ENCODE measurements at regions of chr2 and their contacts with region 1.

Region 1: DNA sequence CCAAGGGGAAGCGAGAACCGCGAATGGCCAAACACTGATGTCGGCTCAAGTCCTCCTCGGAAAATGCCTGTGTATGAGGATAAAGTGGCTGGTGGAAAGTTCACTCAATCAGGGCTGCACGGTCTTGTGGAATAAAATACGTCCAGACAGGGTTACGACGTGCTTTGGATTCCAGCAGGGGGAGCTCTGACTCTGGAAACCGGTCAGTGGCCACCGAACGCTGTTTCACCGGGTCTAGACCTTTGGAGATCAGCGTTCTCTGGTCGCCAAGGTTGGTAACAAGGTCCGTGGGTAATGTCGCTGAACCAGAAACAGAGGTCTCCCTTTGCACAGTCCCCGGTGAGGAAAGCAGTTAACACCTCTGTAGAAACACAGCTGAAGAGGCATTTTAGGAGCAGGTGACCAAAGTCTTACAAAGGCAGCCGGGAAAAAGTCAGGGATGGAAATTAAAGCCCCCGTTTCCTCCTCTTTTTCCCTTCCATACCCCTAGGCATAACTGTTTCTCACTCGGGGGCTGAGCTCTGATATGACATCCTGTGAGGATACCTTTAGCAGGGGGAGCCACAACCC is 47.8 kb downstream of the CDCA7 start:
- H3K4me3 ChIP-seq: peak overlapping the region; percentile 31
- H3K27ac ChIP-seq: no peak overlapping the region; the same call in 1 of the 2 replicates
- H3K4me1 ChIP-seq: no peaks in the 10 kb centered on the region
- CTCF ChIP-seq: peak; percentile 94

Region 2: DNA sequence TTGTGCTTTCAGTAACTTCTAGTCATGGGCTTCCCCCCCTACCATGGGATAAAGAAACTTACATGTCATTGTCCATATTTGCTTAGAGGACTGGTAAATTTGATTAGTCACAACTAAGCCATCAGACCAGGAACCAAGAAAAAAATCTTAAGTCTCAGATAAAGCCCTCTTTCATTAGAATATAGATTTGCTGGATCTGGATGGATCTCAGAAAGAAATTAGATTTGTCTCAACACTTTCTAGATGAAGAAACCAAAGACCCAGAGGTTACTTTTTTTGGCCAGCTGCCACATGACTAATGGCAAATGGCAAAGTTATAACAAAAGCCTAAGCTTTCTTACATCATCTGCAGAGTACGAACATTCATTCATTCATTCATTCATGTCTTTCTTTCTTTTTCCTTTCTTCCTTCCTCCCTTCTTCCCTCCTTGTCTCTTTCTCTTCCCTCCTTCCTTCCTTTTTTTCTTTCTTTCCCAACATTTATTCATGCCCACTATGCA is 12.4 kb after region 1 on chr2:
- CTCF ChIA-PET with region 1: interaction called, 35 read pairs
- POLR2A ChIA-PET with region 1: no interaction called
- H3K4me3 ChIP-seq: no peak overlapping the region
- H3K27ac ChIP-seq: no peak overlapping the region
- H3K4me1 ChIP-seq: peaks cover 6% of the 10 kb centered on the region; the same call in 1 of the 2 replicates
- CTCF ChIP-seq: no peak

Region 3: GRCh38 chr2:173448938-173449471 is 46.5 kb after region 1 on chr2:
- CTCF ChIA-PET with region 1: interaction called, 59 read pairs
- POLR2A ChIA-PET with region 1: interaction called, 3 read pairs
- H3K4me3 ChIP-seq: peak overlapping the region; percentile 25
- H3K27ac ChIP-seq: no peak overlapping the region
- H3K4me1 ChIP-seq: 0 out of 2 replicates have a peak, but pooled peaks cover 3% of the 10 kb centered on the region
- CTCF ChIP-seq: peak; percentile 61

Region 4: GRCh38 chr2:173568054-173568453 is 165.6 kb after region 1 on chr2:
- CTCF ChIA-PET with region 1: interaction called, 66 read pairs
- POLR2A ChIA-PET with region 1: no interaction called
- H3K4me3 ChIP-seq: no peak overlapping the region
- H3K27ac ChIP-seq: no peak overlapping the region
- H3K4me1 ChIP-seq: peaks cover 5% of the 10 kb centered on the region; the same call in 1 of the 2 replicates
- CTCF ChIP-seq: peak; percentile 43; the same call in 1 of the 2 replicates

Region 5: DNA sequence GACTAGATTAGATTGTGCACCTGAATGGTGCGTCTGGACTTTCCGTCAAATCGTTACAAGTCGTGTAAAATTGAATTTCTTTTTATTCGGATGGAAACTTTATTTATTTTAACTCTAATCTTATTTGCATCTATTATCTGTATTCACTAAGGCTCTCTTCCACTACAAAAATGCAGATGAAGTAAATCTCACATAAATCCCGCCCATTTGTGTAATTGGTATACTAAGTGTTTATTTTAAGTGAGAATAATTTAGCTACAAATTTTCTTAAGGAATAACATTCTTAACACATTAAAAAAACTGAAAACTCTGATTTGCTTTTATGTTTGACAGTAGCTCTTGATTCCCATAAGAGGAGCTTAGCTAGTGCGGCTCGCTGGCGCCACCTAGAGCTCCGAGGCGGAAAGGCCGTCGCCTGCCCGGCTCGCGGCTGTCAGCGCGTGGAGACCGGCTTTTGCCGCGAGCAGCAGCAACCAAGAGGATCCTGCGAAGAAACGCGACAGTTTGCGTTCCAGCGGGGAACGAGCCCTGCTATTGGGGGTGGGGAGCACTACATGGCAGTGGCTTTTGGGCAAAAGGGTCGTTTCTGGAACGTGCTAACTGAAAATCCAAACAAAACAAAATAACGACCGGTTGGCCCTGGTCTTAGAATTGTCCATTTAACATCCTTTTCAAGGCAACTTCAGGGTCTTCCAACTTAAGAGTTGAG is 939.0 kb after region 1 on chr2:
- CTCF ChIA-PET with region 1: interaction called, 12 read pairs
- POLR2A ChIA-PET with region 1: no interaction called
- H3K4me3 ChIP-seq: no peak overlapping the region
- H3K27ac ChIP-seq: no peak overlapping the region
- H3K4me1 ChIP-seq: no peaks in the 10 kb centered on the region
- CTCF ChIP-seq: peak; percentile 77